H1 (cell line): ENCODE measurements at regions of chr18 and their contacts with region 1.

Region 1: DNA sequence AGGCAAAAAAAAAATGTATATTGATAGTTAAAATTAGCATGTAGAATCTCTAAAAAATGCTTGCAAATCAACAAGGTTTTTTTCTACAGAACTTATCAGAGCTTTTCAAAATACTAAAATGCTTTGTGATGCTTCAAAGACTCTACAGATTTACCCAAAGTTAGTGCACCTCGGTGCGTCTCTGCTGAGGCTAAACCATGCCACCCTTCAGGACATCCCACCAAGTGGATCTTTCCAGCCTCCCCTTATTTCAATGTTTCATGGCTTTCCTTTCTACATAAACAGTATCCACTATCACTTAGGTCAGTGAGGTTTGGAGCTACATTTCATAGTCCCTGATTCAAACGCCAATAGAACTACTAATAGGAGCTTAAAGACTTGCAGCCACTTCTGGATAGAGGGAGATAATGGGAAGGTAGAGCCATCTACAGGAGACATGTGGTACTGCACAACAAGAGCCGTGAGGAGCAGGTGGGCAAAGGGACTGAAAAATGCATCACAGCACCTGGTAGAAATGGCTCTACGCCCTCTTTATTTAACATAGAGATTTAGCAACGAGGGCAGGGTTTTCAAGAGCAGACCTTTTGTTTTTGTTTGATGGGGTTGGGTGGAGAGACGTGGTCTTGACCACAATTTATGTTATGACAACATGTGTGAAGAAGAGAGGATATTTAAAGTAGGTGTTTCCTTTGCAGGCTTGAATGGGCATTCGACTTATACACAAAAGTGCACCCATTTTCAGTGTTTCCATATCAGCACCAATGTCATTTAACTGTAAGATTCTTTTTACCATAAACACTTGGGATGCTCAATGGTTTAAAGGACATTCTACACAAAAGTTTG is 56.1 kb upstream of the SLC35G4 start:
- DNase-seq: peak; percentile 15 to 78
- H3K4me3 ChIP-seq: no peak overlapping the region
- H3K27ac ChIP-seq: no peak overlapping the region
- H3K4me1 ChIP-seq: no peaks in the 10 kb centered on the region
- H3K27me3 ChIP-seq: no peaks in the 10 kb centered on the region
- CTCF ChIP-seq: peak; percentile 56 to 91 (median 73)
- EP300 ChIP-seq: no peak
- POLR2A ChIP-seq: no peak
- RAD21 ChIP-seq: peak; percentile 89 to 90

Region 2: GRCh38 chr18:11541202-11541601 is 12.1 kb before region 1 on chr18:
- CTCF ChIA-PET with region 1: interaction called, 37 read pairs
- POLR2A ChIA-PET with region 1: no interaction called
- DNase-seq: no peak
- H3K4me3 ChIP-seq: no peak overlapping the region
- H3K27ac ChIP-seq: no peak overlapping the region
- H3K4me1 ChIP-seq: peaks cover 0 to 2% (median under 1%) of the 10 kb centered on the region in 4 experiments; a peak in 1 of 7 replicates
- H3K27me3 ChIP-seq: no peaks in the 10 kb centered on the region
- CTCF ChIP-seq: no peak
- EP300 ChIP-seq: no peak
- POLR2A ChIP-seq: no peak
- RAD21 ChIP-seq: no peak

Region 3: DNA sequence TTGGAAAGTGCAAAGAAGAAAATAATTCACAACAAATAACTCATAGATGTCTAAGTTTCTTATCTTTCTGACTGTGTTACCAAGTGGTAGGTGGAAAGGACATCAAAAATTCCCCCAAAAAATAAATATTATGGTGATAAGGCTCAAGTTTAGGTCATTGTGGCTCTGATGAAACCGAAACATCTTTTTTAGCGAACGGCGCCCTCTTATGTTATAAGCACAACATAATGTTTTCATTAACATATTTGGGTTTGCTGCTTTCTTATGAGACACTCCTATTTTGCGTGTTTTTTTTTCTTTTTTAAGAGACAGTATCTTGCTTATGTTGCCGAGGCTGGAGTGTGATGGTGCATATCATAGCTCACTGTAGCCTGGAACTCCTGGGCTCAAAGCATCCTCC is 17.4 kb after region 1 on chr18:
- CTCF ChIA-PET with region 1: interaction called, 10 read pairs
- POLR2A ChIA-PET with region 1: no interaction called
- DNase-seq: no peak
- H3K4me3 ChIP-seq: no peak overlapping the region
- H3K27ac ChIP-seq: no peak overlapping the region
- H3K4me1 ChIP-seq: no peaks in the 10 kb centered on the region; a peak in 1 of 7 replicates
- H3K27me3 ChIP-seq: no peaks in the 10 kb centered on the region
- CTCF ChIP-seq: peak in 1 of 3 experiments; percentile 14; a peak in 1 of 4 replicates
- EP300 ChIP-seq: no peak
- POLR2A ChIP-seq: no peak
- RAD21 ChIP-seq: peak; percentile 42 to 48